B cell (primary cell): ENCODE measurements at regions of chr6 and their contacts with region 1.

Region 1: GRCh38 chr6:26543953-26544352 is 5.8 kb downstream of the HMGN4 start:
- DNase-seq: peak; percentile 33
- ATAC-seq: peak; percentile 64
- H3K4me3 ChIP-seq: no peak overlapping the region
- H3K4me3 Mint-ChIP-seq: no peak overlapping the region
- H3K27ac ChIP-seq: no peak overlapping the region
- H3K27ac Mint-ChIP-seq: no peak overlapping the region
- H3K4me1 ChIP-seq: peaks cover 11% of the 10 kb centered on the region in 2 donors
- H3K4me1 Mint-ChIP-seq: peaks cover 30% of the 10 kb centered on the region
- H3K27me3 ChIP-seq: no peaks in the 10 kb centered on the region
- H3K27me3 Mint-ChIP-seq: no peaks in the 10 kb centered on the region
- CTCF ChIP-seq: peak; percentile 67

Region 2: GRCh38 chr6:25449774-25450173 is 1094.2 kb before region 1 on chr6:
- CTCF ChIA-PET with region 1: no interaction called
- POLR2A ChIA-PET with region 1: no interaction called
- intact Hi-C with region 1: no loop called
- DNase-seq: no peak
- ATAC-seq: no peak
- H3K4me3 ChIP-seq: no peak overlapping the region
- H3K4me3 Mint-ChIP-seq: no peak overlapping the region
- H3K27ac ChIP-seq: no peak overlapping the region
- H3K27ac Mint-ChIP-seq: no peak overlapping the region
- H3K4me1 ChIP-seq: peaks cover 11 to 15% of the 10 kb centered on the region in 2 donors
- H3K4me1 Mint-ChIP-seq: peaks cover 23% of the 10 kb centered on the region
- H3K27me3 ChIP-seq: no peaks in the 10 kb centered on the region
- H3K27me3 Mint-ChIP-seq: no peaks in the 10 kb centered on the region
- CTCF ChIP-seq: no peak

Region 3: DNA sequence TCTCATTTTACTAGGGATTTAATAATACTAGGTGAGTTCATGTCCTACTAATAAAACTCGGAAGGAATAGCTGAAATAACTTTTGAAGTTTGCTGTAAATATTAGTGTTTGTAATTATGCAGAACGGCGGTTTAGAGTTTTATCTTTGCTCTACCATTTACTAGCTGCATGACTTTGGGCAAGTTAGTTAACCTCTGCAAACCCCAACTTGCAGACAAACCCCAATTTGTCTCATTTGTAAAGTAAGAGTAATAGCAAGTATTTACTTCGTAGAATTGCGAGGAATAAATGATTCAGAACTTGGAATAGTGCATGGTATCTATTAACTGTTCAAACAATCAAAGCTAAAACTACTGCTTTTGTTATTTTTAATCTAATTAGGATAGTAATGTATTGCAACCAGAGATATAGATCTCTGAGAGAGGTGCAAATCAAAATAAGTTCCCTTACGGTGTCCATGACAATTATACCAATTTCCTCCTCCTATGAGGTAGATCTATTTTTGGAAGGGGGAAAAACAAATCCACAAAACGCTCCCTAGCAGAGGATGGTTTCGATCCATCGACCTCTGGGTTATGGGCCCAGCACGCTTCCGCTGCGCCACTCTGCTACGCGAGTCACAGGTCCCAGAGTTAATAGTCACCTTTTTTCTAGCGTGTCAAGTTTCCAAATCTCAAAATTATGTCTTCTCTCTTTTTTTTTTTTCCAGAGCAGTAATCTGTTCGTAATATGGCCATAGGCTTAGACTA is 214.0 kb before region 1 on chr6:
- CTCF ChIA-PET with region 1: no interaction called
- POLR2A ChIA-PET with region 1: interaction called, 10 read pairs
- intact Hi-C with region 1: no loop called
- DNase-seq: peak; percentile 63
- ATAC-seq: no peak
- H3K4me3 ChIP-seq: no peak overlapping the region
- H3K4me3 Mint-ChIP-seq: peak overlapping the region; percentile 64
- H3K27ac ChIP-seq: no peak overlapping the region
- H3K27ac Mint-ChIP-seq: peak overlapping the region; percentile 73
- H3K4me1 ChIP-seq: peaks cover 23 to 27% of the 10 kb centered on the region in 2 donors
- H3K4me1 Mint-ChIP-seq: peaks cover 26% of the 10 kb centered on the region
- H3K27me3 ChIP-seq: peaks cover 0 to 63% (median 62%) of the 10 kb centered on the region in 4 experiments
- H3K27me3 Mint-ChIP-seq: peaks cover 61% of the 10 kb centered on the region
- CTCF ChIP-seq: no peak